ENCODE measurements at regions of chr1 and their contacts with region 1.

Region 1: DNA sequence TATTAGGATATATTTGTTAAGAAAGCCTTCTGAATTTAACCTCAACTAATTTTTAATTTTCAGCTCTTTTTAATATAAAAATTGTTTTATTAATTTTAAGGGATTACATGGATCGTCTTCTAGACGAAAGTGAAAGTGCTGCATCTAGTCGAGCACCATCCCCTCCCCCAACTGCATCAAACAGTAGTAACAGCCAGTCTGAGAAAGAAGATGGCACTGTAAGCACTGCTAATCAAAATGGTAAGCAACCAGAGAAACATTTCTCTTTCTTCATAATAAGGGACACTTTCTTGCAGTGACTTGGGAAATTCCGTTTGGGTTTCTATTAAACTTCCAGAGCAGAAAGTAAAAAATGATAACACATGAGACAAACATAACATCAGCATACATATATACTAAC is 56.9 kb downstream of the MIER1 start:
- DNase-seq: peak in 7 of 9 donors; percentile 52 to 78 (median 69)
- ATAC-seq: peak; percentile 93
- H3K4me3 ChIP-seq: peak overlapping the region; percentile 22
- H3K4me3 Mint-ChIP-seq: peak overlapping the region; percentile 64 to 84 (median 80)
- H3K27ac ChIP-seq: peak overlapping the region; percentile 78
- H3K27ac Mint-ChIP-seq: peak overlapping the region; percentile 83 to 94 (median 93)
- H3K4me1 ChIP-seq: peaks cover 0 to 8% of the 10 kb centered on the region in 2 donors
- H3K4me1 Mint-ChIP-seq: peaks cover 6 to 48% (median 37%) of the 10 kb centered on the region in 7 donors
- H3K27me3 ChIP-seq: no peaks in the 10 kb centered on the region
- H3K27me3 Mint-ChIP-seq: no peaks in the 10 kb centered on the region

Region 2: GRCh38 chr1:66929999-66930822 is 51.5 kb before region 1 on chr1:
- CTCF ChIA-PET with region 1: interaction called, 3 read pairs
- POLR2A ChIA-PET with region 1: interaction called, 5 read pairs
- intact Hi-C with region 1: loop called (anchors 2 kb)
- DNase-seq: peak; percentile 88 to 97 (median 92)
- ATAC-seq: peak; percentile 88
- H3K4me3 ChIP-seq: peak overlapping the region; percentile 69
- H3K4me3 Mint-ChIP-seq: peak overlapping the region; percentile 85 to 98 (median 92)
- H3K27ac ChIP-seq: peak overlapping the region; percentile 91
- H3K27ac Mint-ChIP-seq: peak overlapping the region; percentile 79 to 95 (median 90)
- H3K4me1 ChIP-seq: peaks cover 45 to 48% of the 10 kb centered on the region in 2 donors
- H3K4me1 Mint-ChIP-seq: peaks cover 38 to 88% (median 70%) of the 10 kb centered on the region in 7 donors
- H3K27me3 ChIP-seq: no peaks in the 10 kb centered on the region
- H3K27me3 Mint-ChIP-seq: no peaks in the 10 kb centered on the region

Region 3: DNA sequence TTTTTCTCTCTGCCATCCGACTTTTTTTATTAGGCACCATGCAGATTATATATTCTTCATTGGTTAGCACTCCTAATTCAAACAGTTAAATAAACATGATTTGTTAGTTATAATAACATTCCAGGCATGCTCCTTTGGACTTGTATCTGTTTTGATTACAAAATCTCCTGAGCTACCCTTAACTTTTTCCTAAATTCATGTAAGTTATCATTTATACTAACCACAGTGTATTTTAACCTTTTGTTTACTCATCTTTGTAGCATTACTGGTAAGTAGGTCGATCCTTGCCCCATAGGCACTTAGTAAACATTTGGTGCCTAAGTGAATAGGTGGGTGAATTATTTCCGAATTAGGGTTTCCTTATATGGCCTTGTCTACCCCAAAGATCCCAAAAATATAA is 13.1 kb before region 1 on chr1:
- CTCF ChIA-PET with region 1: interaction called, 3 read pairs
- POLR2A ChIA-PET with region 1: interaction called, 3 read pairs
- intact Hi-C with region 1: loop called (anchors 1 to 2 kb)
- DNase-seq: no peak
- ATAC-seq: no peak
- H3K4me3 ChIP-seq: no peak overlapping the region
- H3K4me3 Mint-ChIP-seq: no peak overlapping the region
- H3K27ac ChIP-seq: no peak overlapping the region
- H3K27ac Mint-ChIP-seq: peak overlapping the region in 7 of 9 donors; percentile 10 to 91 (median 59)
- H3K4me1 ChIP-seq: no peaks in the 10 kb centered on the region
- H3K4me1 Mint-ChIP-seq: peaks cover 12 to 44% (median 31%) of the 10 kb centered on the region in 7 donors
- H3K27me3 ChIP-seq: no peaks in the 10 kb centered on the region
- H3K27me3 Mint-ChIP-seq: no peaks in the 10 kb centered on the region

Region 4: DNA sequence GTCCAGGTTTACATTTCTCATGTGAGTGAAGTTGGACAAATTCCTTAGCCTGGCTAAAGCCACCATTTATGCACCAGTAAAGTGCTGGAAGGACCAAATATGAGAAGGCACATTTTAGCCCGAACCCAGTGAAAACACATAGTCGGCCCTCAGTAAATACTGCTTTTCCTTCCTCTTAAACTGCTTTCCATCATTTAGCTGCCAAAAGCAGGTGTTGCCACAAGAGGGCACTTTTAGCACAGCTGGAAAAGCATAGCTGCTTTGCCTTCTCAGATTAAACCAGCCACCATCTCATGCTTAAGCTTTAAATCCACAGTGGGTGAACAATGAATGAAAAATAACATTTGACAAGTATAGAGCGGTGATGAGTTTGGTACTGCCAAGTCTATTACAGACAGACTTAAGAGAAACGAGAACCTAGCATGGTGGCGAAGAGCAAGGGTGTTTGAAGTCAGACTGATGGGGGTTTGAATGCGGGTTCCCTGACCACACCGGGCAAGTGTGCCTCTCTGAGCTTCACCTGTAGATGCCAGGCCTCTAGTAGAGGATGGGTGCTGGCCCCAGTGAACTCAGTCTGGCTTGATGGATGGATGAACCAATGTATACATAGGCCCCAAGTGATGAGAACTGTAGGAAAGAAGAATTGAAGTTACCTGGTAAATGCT is 14.5 kb after region 1 on chr1:
- CTCF ChIA-PET with region 1: interaction called, 7 read pairs
- POLR2A ChIA-PET with region 1: no interaction called
- intact Hi-C with region 1: loop called in 1 of 2 experiments (anchors 2 kb)
- DNase-seq: peak; percentile 14 to 75 (median 63)
- ATAC-seq: peak; percentile 93
- H3K4me3 ChIP-seq: no peak overlapping the region
- H3K4me3 Mint-ChIP-seq: no peak overlapping the region
- H3K27ac ChIP-seq: no peak overlapping the region
- H3K27ac Mint-ChIP-seq: peak overlapping the region in 5 of 9 donors; percentile 7 to 78 (median 74)
- H3K4me1 ChIP-seq: peaks cover 0 to 5% of the 10 kb centered on the region in 2 donors
- H3K4me1 Mint-ChIP-seq: peaks cover 4 to 24% (median 23%) of the 10 kb centered on the region in 7 donors
- H3K27me3 ChIP-seq: no peaks in the 10 kb centered on the region
- H3K27me3 Mint-ChIP-seq: no peaks in the 10 kb centered on the region

Region 5: GRCh38 chr1:67031121-67031858 is 49.6 kb after region 1 on chr1:
- CTCF ChIA-PET with region 1: no interaction called
- POLR2A ChIA-PET with region 1: no interaction called
- intact Hi-C with region 1: no loop called
- DNase-seq: no peak
- ATAC-seq: no peak
- H3K4me3 ChIP-seq: no peak overlapping the region
- H3K4me3 Mint-ChIP-seq: no peak overlapping the region
- H3K27ac ChIP-seq: no peak overlapping the region
- H3K27ac Mint-ChIP-seq: no peak overlapping the region
- H3K4me1 ChIP-seq: no peaks in the 10 kb centered on the region
- H3K4me1 Mint-ChIP-seq: peaks cover 0 to 12% (median 5%) of the 10 kb centered on the region in 7 donors
- H3K27me3 ChIP-seq: no peaks in the 10 kb centered on the region
- H3K27me3 Mint-ChIP-seq: no peaks in the 10 kb centered on the region

Measured in naive thymus-derived CD4-positive, alpha-beta T cell (primary cell).